B cell (primary cell): ENCODE measurements at regions of chr2 and their contacts with region 1.

Region 1: GRCh38 chr2:197705121-197705911 is at the start of gene MARS2:
- DNase-seq: peak; percentile 96
- ATAC-seq: peak; percentile 85
- H3K4me3 ChIP-seq: peak within 1 kb of the TSS; percentile 66 to 85 (median 80)
- H3K4me3 Mint-ChIP-seq: peak within 1 kb of the TSS; percentile 92
- H3K27ac ChIP-seq: peak within 1 kb of the TSS; percentile 80 to 85
- H3K27ac Mint-ChIP-seq: peak within 1 kb of the TSS; percentile 95
- H3K4me1 ChIP-seq: peaks cover 26 to 31% of the 10 kb centered on the region in 2 donors
- H3K4me1 Mint-ChIP-seq: peaks cover 45% of the 10 kb centered on the region
- H3K27me3 ChIP-seq: peaks cover 0 to 10% (median 0%) of the 10 kb centered on the region in 4 experiments
- H3K27me3 Mint-ChIP-seq: peaks cover 12% of the 10 kb centered on the region
- CTCF ChIP-seq: no peak
- total RNA-seq, gene MARS2: 10.5 and 12.0 TPM in 2 replicates

Region 2: DNA sequence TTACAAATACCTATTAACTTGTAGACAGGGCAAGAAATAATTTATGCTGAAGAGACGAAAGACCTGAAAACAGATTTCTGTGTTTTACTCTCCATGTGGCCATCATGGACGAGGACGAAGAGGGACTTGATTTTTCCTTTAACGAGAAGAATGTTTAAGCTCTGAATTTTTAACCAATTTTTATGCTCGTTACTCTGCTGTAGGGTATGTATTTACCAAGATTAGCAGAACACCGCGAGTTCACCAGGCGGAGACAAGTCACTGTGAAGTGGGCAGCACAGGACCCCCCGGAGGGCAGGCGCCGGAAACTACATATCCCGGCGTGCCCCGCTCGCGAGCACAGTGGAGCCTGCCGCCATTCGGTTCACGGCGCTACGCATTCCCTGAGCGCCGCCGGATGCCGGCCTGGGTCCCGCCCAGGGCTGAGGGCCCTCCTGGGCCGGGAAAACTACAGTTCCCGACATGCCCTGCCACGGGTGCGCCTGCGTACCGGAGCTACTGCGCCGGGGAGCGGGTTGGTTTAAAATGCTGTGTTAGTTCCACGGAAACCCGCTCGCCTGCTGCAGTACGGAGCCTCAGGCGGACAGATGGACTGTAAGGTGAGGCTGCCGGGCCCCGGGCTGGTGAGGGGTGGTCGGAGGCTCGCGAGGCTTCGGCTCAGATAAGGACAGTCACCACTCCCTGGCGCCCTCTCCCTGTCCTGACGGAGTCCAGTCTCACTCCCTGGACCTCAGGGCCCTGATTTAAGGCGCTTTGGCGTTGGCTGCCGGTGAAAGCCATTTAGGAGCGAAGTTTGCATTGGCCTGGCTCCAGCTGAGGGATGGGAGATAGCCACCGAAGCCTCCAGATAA is 1065.9 kb before region 1 on chr2 and contains the start of gene CCDC150:
- CTCF ChIA-PET with region 1: no interaction called
- POLR2A ChIA-PET with region 1: no interaction called
- intact Hi-C with region 1: loop called (anchors 2 kb)
- DNase-seq: peak; percentile 94
- ATAC-seq: peak; percentile 100
- H3K4me3 ChIP-seq: peak within 1 kb of the TSS; percentile 54 to 88 (median 68)
- H3K4me3 Mint-ChIP-seq: peak within 1 kb of the TSS; percentile 94
- H3K27ac ChIP-seq: peak within 1 kb of the TSS in 1 of 2 donors; percentile 56
- H3K27ac Mint-ChIP-seq: peak within 1 kb of the TSS; percentile 70
- H3K4me1 ChIP-seq: peaks cover 7 to 17% of the 10 kb centered on the region in 2 donors
- H3K4me1 Mint-ChIP-seq: peaks cover 21% of the 10 kb centered on the region
- H3K27me3 ChIP-seq: no peaks in the 10 kb centered on the region
- H3K27me3 Mint-ChIP-seq: peaks cover 8% of the 10 kb centered on the region
- CTCF ChIP-seq: no peak
- total RNA-seq, gene CCDC150: 4.9 and 5.0 TPM in 2 replicates

Region 3: DNA sequence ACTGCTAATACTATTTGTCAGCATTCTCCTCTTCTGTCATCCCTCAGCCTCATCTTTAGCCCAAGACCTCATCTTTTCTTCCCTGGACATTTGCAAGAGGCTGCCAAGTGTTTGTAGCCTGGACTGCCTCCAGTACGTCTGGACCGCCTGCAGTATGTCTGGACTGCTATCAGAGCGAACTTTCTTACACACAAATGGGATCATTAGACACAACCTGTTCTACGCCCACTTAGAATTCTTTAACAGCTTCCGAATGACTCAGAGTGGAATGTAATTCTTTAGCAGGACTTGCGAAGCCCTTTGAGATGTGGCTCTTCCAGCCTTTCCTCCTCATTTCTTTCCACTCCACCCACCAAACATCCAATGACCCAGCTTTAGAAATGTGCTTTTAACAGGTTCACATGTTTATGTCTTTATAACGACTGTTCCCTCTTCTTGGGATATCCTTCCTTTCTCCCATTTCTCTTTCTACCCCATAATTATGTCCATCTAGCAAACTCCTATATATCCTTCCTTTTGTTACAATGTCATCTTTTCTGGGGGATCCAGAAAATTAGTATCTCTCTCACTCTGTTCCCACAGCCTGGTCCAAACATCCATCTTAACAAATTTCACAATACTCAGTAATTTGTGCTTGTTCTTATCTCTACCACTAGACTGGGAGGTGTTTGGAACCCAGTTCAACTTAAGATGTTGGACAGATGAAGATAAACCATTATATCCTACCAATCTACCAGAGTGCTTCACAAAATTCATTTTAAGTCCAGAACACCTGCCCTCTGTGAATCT is 607.5 kb before region 1 on chr2:
- CTCF ChIA-PET with region 1: no interaction called
- POLR2A ChIA-PET with region 1: no interaction called
- intact Hi-C with region 1: no loop called
- DNase-seq: no peak
- ATAC-seq: no peak
- H3K4me3 ChIP-seq: no peak overlapping the region
- H3K4me3 Mint-ChIP-seq: no peak overlapping the region
- H3K27ac ChIP-seq: no peak overlapping the region
- H3K27ac Mint-ChIP-seq: peak overlapping the region; percentile 28
- H3K4me1 ChIP-seq: no peaks in the 10 kb centered on the region
- H3K4me1 Mint-ChIP-seq: no peaks in the 10 kb centered on the region
- H3K27me3 ChIP-seq: no peaks in the 10 kb centered on the region
- H3K27me3 Mint-ChIP-seq: no peaks in the 10 kb centered on the region
- CTCF ChIP-seq: no peak

Region 4: DNA sequence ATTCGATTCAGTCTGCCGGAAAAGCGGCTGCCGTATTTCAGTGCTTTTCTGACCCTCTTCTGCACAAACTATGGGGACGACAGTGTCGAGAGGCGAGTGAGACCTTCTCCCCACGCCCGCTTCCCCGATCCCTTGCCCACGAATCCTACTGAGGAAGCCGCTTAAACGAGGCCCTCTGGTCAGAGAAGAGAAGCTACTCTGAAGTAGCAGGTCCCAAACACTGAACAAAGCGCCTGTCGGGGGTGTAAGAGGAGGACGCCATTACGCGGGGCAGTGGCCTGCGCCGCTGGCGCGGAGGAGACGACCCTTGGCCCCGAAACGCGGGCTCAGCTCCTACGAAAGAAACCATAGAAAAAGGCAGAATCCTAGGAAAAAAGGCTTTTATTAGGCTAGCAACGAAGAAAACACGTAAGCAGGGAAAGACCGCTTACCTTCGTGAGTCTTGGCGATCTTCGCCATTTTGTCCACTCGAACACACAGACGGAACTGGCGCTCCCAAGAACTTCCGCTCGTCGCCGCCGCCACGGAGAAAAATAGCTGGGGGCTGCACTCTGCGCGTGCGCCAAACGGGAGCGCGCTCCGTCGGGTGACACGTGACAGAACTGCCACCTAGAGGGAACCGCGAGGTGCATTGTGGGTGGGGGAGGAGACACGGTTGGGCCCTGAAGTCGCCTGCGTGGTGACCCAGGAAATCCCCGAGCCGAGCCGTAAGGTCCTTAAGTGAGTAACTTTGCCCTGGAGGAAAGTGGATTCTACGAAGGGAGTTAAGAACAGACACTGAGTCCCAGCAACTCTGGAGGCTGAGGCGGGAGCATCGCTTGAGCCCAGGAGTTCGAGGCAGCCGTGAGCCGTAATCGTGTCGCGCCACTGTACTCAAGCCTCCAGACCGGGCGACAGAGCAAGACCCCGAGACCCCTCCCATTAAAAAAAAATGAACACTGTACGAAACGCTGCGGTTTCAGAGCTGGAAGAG is 270.5 kb before region 1 on chr2 and contains the start of gene SF3B1:
- CTCF ChIA-PET with region 1: no interaction called
- POLR2A ChIA-PET with region 1: interaction called, 3 read pairs
- intact Hi-C with region 1: loop called (anchors 2 kb)
- DNase-seq: peak; percentile 99
- ATAC-seq: peak; percentile 96
- H3K4me3 ChIP-seq: peak within 1 kb of the TSS; percentile 95 to 100 (median 99)
- H3K4me3 Mint-ChIP-seq: peak within 1 kb of the TSS; percentile 99
- H3K27ac ChIP-seq: peak within 1 kb of the TSS; percentile 95 to 98
- H3K27ac Mint-ChIP-seq: peak within 1 kb of the TSS; percentile 100
- H3K4me1 ChIP-seq: peaks cover 41 to 45% of the 10 kb centered on the region in 2 donors
- H3K4me1 Mint-ChIP-seq: peaks cover 52% of the 10 kb centered on the region
- H3K27me3 ChIP-seq: no peaks in the 10 kb centered on the region
- H3K27me3 Mint-ChIP-seq: no peaks in the 10 kb centered on the region
- CTCF ChIP-seq: no peak
- total RNA-seq, gene SF3B1: 523 and 524 TPM in 2 replicates

Region 5: GRCh38 chr2:197515739-197516392 is 189.4 kb before region 1 on chr2 and contains the start of gene MOB4:
- CTCF ChIA-PET with region 1: no interaction called
- POLR2A ChIA-PET with region 1: no interaction called
- intact Hi-C with region 1: loop called (anchors 2 kb)
- DNase-seq: peak; percentile 98
- ATAC-seq: peak; percentile 95
- H3K4me3 ChIP-seq: peak within 1 kb of the TSS; percentile 79 to 90 (median 85)
- H3K4me3 Mint-ChIP-seq: peak within 1 kb of the TSS; percentile 97
- H3K27ac ChIP-seq: peak within 1 kb of the TSS; percentile 92 to 96
- H3K27ac Mint-ChIP-seq: peak within 1 kb of the TSS; percentile 91
- H3K4me1 ChIP-seq: peaks cover 10 to 17% of the 10 kb centered on the region in 2 donors
- H3K4me1 Mint-ChIP-seq: peaks cover 41% of the 10 kb centered on the region
- H3K27me3 ChIP-seq: no peaks in the 10 kb centered on the region
- H3K27me3 Mint-ChIP-seq: no peaks in the 10 kb centered on the region
- CTCF ChIP-seq: no peak
- total RNA-seq, gene MOB4: 20.1 and 20.8 TPM in 2 replicates

Region 6: GRCh38 chr2:198296665-198297308 is 591.5 kb after region 1 on chr2:
- CTCF ChIA-PET with region 1: interaction called, 13 read pairs
- POLR2A ChIA-PET with region 1: no interaction called
- intact Hi-C with region 1: no loop called
- DNase-seq: peak; percentile 60
- ATAC-seq: peak; percentile 69
- H3K4me3 ChIP-seq: no peak overlapping the region
- H3K4me3 Mint-ChIP-seq: no peak overlapping the region
- H3K27ac ChIP-seq: no peak overlapping the region
- H3K27ac Mint-ChIP-seq: no peak overlapping the region
- H3K4me1 ChIP-seq: no peaks in the 10 kb centered on the region
- H3K4me1 Mint-ChIP-seq: peaks cover 4% of the 10 kb centered on the region
- H3K27me3 ChIP-seq: peaks cover 0 to 7% (median 0%) of the 10 kb centered on the region in 4 experiments
- H3K27me3 Mint-ChIP-seq: peaks cover 11% of the 10 kb centered on the region
- CTCF ChIP-seq: peak; percentile 93